ENCODE measurements at regions of chr9 and their contacts with region 1.

Region 1: GRCh38 chr9:129610473-129611301 is 10.2 kb downstream of the C9orf50 start:
- DNase-seq: no peak
- ATAC-seq: peak; percentile 77
- H3K4me3 ChIP-seq: peak overlapping the region; percentile 81; the same call in 1 of the 2 replicates
- H3K27ac ChIP-seq: no peak overlapping the region
- H3K4me1 ChIP-seq: peaks cover 8% of the 10 kb centered on the region
- H3K27me3 ChIP-seq: no peaks in the 10 kb centered on the region
- CTCF ChIP-seq: peak; percentile 80 to 91 (median 90)
- EP300 ChIP-seq: no peak
- POLR2A ChIP-seq: no peak
- RAD21 ChIP-seq: peak; percentile 89

Region 2: GRCh38 chr9:129482521-129483414 is 127.9 kb before region 1 on chr9:
- CTCF ChIA-PET with region 1: no interaction called
- POLR2A ChIA-PET with region 1: no interaction called
- RAD21 ChIA-PET with region 1: no interaction called
- SMC1A ChIA-PET with region 1: no interaction called
- in situ Hi-C with region 1: no loop called
- intact Hi-C with region 1: loop called (anchors 10 kb)
- DNase-seq: no peak
- ATAC-seq: no peak
- H3K4me3 ChIP-seq: no peak overlapping the region
- H3K27ac ChIP-seq: no peak overlapping the region
- H3K4me1 ChIP-seq: no peaks in the 10 kb centered on the region
- H3K27me3 ChIP-seq: peaks cover 10 to 19% of the 10 kb centered on the region in 2 experiments
- CTCF ChIP-seq: no peak
- EP300 ChIP-seq: no peak
- POLR2A ChIP-seq: no peak
- RAD21 ChIP-seq: no peak